Activated T-helper 1 cell treated with anti-CD3 and anti-CD28 coated beads, Interleukin-12 subunit alpha, Interleukin-12 subunit beta, Interleukin-2, Interleukin-4 antibody, amounts not matched to agents 30 ng/mL and 10 ng/mL and 1 ng/mL, durations not matched to agents 14 hours and 24 hours and 36 hours (primary cell): ENCODE measurements at regions of chr12 and their contacts with region 1.

Region 1: DNA sequence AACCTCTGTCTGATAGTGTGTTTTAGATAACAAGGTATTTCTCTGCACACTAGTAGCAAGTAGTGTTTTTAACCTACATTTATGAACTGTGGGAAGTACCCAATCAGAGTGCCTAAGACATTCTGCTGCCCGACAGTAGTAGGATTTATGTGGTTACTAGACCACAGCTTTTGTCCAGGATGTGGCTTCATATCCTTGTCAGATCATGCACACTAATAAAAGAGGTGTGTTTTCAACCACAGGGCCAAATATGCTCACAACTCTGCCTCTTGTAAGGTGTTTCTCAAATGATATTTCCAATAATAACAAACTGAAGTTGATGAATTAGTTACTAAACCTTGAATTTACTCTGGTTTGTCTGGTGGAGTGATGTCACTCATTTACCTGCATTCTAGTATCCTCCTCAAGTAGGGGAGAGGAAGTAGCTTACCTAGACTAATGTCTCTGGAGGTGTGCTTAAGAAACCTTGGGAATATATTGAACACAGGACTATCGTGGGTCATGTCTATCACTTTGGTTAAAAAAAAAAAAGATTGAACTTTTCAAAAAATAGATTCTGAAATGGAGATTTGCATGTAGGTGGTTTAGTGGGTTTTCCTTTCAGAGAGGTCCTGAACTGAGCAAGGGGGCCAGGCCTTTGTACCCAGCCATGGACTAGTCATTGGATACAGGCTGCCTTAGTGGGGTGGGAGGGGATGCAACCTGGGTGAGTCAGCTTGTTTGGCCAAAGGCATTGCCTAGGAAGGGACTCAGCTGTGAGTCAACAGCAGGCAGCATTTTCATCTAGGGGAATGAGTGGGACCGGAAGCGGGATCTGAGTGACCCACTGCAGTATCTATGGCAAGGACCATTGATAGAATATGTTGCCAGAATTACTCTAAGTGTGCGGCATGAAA is 14.1 kb downstream of the FBXW8 start:
- DNase-seq: peak; percentile 54
- H3K4me3 Mint-ChIP-seq: peak overlapping the region; percentile 68
- H3K27ac Mint-ChIP-seq: peak overlapping the region; percentile 54
- H3K4me1 Mint-ChIP-seq: peaks cover 61% of the 10 kb centered on the region
- H3K27me3 Mint-ChIP-seq: no peaks in the 10 kb centered on the region

Region 2: DNA sequence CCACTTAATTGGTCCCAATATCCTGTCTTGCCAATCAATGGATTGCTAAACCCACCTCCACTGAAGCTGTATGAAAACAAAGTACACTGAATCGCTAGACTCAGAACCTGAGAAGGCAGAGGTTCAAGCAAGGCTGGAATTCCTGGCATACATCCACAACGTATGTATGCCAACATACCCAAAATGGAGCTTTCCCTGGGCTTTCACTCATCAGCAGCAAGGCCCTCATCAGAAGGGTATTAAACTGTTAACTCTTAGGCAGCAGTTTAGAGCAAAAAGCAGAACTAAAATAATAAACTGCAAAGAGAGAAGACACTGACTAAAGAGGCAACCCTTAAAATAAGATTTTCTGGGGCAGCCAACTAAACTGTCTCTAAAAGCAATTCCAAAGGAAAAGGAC is 661.0 kb before region 1 on chr12:
- intact Hi-C with region 1: loop called (anchors 5 kb)
- DNase-seq: no peak
- H3K4me3 Mint-ChIP-seq: no peak overlapping the region
- H3K27ac Mint-ChIP-seq: no peak overlapping the region
- H3K4me1 Mint-ChIP-seq: peaks cover 38% of the 10 kb centered on the region
- H3K27me3 Mint-ChIP-seq: peaks cover 3% of the 10 kb centered on the region

Region 3: DNA sequence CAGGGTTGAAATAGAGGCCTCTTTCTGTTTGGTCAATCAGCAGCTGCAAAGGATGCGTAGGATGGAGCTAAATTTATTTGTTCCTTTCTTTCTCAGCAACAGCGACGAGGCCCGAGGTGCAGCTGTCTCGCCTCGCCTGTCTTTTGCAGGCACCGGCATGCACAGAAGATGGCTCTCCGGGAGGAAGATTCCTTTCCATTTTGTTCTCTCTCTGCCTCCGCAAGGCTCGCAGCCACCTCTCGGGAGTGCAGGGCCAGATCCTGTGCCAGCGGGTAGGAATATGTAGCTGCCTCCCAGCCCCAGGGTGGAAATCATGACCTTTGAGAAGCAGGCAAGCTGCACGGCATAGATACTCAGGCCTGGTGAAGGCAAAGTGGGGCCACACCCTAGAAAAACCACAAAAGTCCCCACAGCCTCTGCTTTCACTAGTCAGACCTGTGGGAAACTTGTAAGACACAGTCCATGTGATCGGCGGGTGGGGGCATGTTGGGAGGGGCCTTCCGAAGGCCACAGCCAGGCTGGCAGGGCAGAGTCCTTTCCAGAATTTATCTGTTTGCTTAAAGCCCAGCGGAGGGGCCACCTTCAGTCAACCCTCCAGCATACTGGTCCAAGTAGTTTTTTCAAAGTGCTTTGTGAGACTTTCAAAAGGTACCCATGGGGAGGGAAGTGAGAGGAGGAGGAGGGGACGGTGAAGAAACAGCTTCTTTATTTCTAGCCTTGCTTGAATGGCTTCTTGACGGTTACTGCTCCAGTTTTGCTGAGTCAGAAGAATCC is 365.5 kb before region 1 on chr12 and contains the start of gene MAP1LC3B2:
- intact Hi-C with region 1: loop called (anchors 1 kb)
- DNase-seq: peak; percentile 85
- H3K4me3 Mint-ChIP-seq: peak within 1 kb of the TSS; percentile 65
- H3K27ac Mint-ChIP-seq: peak within 1 kb of the TSS; percentile 94
- H3K4me1 Mint-ChIP-seq: peaks cover 38% of the 10 kb centered on the region
- H3K27me3 Mint-ChIP-seq: peaks cover 6% of the 10 kb centered on the region
- total RNA-seq, gene MAP1LC3B2: 0.49 and 0.57 TPM in 2 replicates

Region 4: GRCh38 chr12:116818948-116819832 is 105.6 kb before region 1 on chr12:
- intact Hi-C with region 1: loop called (anchors 1 kb)
- DNase-seq: peak; percentile 85
- H3K4me3 Mint-ChIP-seq: peak overlapping the region; percentile 94
- H3K27ac Mint-ChIP-seq: peak overlapping the region; percentile 98
- H3K4me1 Mint-ChIP-seq: peaks cover 21% of the 10 kb centered on the region
- H3K27me3 Mint-ChIP-seq: peaks cover 9% of the 10 kb centered on the region

Region 5: DNA sequence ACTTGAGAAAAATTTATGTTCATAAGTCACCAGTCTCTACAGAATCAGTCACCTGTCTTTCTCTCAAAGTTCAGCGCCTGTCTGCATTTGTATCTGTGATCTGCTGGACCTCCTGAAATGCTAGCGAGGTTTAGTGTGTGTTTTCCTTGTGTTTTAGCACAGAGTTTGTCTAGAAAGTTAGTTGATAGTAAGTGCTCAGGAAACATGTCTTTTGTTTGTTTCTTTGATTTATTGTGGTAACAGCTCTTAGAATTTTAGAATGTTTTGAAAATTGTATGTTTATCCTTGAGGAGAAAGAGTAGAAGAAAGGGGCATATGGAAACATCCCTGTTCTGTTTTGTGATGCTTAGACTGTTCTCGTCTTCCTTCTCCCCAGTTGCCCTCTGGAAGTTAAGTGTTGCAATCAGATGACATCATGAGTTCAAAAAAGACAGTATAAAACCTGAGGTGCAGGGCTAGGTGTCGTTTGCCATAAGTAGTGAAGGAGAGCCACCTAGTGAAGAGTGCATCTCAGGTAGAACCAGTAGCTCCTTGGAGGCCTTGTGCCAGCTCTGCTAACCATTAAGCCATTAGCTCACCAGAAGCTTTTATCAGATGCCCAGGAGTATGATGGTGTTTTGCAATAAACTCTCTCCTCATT is 30.7 kb after region 1 on chr12:
- intact Hi-C with region 1: loop called (anchors 1 kb)
- DNase-seq: no peak
- H3K4me3 Mint-ChIP-seq: no peak overlapping the region
- H3K27ac Mint-ChIP-seq: no peak overlapping the region
- H3K4me1 Mint-ChIP-seq: peaks cover 32% of the 10 kb centered on the region
- H3K27me3 Mint-ChIP-seq: no peaks in the 10 kb centered on the region

Region 6: GRCh38 chr12:117134059-117134458 is 209.3 kb after region 1 on chr12:
- intact Hi-C with region 1: loop called (anchors 1 kb)
- DNase-seq: peak; percentile 59
- H3K4me3 Mint-ChIP-seq: peak overlapping the region; percentile 20
- H3K27ac Mint-ChIP-seq: peak overlapping the region; percentile 87
- H3K4me1 Mint-ChIP-seq: peaks cover 11% of the 10 kb centered on the region
- H3K27me3 Mint-ChIP-seq: peaks cover 5% of the 10 kb centered on the region

Region 7: DNA sequence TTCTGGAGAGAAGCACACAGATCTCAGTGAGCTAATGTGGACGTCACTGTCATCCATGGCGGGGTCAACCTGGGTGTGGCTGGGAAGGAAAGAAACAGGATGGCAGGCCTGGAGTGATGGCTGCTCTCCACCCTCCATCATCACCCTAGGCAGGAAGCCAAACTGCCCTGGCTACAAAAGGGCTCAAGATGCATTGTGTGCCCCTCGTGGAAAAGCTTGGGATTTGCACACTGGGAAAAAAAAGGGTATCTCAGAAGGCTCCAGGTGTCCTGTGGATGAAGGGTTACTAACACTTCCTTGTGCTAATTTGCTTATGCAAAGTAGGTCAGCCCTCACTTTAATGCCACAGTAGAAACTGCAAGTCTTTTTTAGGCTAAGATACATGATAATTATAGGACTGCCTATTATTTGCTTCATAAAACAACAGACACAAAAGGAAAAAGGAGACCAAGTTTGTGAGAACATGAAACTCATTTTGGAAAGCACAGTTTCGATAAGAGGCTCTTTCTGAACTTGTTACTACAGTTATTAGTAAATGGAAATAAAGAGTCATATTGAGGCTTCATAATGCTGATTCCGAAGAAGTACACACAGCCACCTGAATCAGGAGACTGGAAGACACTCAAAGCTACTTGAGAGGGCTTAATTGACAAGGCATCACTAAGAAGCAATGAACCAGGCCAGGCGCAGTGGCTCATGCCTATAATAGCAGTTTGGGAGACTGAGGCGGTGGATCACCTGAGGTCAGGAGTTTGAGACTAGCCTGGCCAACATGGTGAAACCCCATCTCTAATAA is 1110.6 kb after region 1 on chr12:
- intact Hi-C with region 1: loop called (anchors 10 kb)
- DNase-seq: no peak
- H3K4me3 Mint-ChIP-seq: peak overlapping the region; percentile 57
- H3K27ac Mint-ChIP-seq: peak overlapping the region; percentile 99
- H3K4me1 Mint-ChIP-seq: peaks cover 46% of the 10 kb centered on the region
- H3K27me3 Mint-ChIP-seq: no peaks in the 10 kb centered on the region